Caco-2 (cell line): ENCODE measurements at regions of chr6 and their contacts with region 1.

Region 1: GRCh38 chr6:114108119-114109002 is 137.4 kb upstream of the HDAC2 start:
- DNase-seq: peak; percentile 85 to 87
- H3K4me3 ChIP-seq: no peak overlapping the region
- H3K4me3 Mint-ChIP-seq: no peak overlapping the region
- H3K27ac Mint-ChIP-seq: no peak overlapping the region
- H3K4me1 ChIP-seq: peaks cover 5% of the 10 kb centered on the region; the same call in 1 of the 2 replicates
- H3K4me1 Mint-ChIP-seq: peaks cover 13% of the 10 kb centered on the region
- H3K27me3 ChIP-seq: no peaks in the 10 kb centered on the region
- H3K27me3 Mint-ChIP-seq: no peaks in the 10 kb centered on the region
- CTCF ChIP-seq: peak; percentile 76 to 79

Region 2: DNA sequence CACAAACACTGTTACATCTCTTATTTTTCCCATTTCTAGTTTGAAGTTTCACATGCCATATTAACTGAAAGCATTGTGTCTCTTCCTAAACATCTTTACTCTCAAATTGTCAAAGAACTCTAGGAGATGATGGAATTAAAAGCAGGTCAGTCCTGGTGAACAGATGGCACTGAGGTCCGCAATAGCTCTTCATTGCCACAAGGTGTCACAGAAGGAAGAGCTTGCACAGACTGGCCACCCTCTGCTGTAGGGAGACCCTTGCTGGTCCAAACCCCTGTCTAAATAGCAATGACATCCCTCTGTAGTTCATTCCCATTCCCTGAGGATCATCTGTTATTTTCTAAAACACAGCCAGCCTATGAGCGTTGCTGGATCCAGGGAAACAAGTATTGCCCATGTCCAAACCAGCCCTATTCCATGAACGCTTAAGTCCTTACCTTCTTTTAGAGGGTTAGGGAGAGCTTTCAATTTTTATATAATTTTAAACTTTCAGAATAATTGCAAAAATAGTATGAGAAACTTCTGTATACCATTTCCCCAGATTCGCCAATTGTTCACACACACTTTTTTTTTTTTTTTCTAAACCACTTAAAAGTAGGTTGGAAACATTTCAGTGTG is 127.3 kb before region 1 on chr6:
- CTCF ChIA-PET with region 1: interaction called, 29 read pairs
- POLR2A ChIA-PET with region 1: interaction called, 3 read pairs
- intact Hi-C with region 1: loop called (anchors 1 kb)
- DNase-seq: peak; percentile 50 to 66
- H3K4me3 ChIP-seq: no peak overlapping the region
- H3K4me3 Mint-ChIP-seq: no peak overlapping the region
- H3K27ac Mint-ChIP-seq: no peak overlapping the region
- H3K4me1 ChIP-seq: no peaks in the 10 kb centered on the region
- H3K4me1 Mint-ChIP-seq: no peaks in the 10 kb centered on the region
- H3K27me3 ChIP-seq: no peaks in the 10 kb centered on the region
- H3K27me3 Mint-ChIP-seq: no peaks in the 10 kb centered on the region
- CTCF ChIP-seq: peak; percentile 76 to 78

Region 3: GRCh38 chr6:114135363-114135992 is 27.1 kb after region 1 on chr6:
- CTCF ChIA-PET with region 1: no interaction called
- POLR2A ChIA-PET with region 1: no interaction called
- intact Hi-C with region 1: no loop called
- DNase-seq: no peak
- H3K4me3 ChIP-seq: no peak overlapping the region
- H3K4me3 Mint-ChIP-seq: no peak overlapping the region
- H3K27ac Mint-ChIP-seq: no peak overlapping the region
- H3K4me1 ChIP-seq: no peaks in the 10 kb centered on the region
- H3K4me1 Mint-ChIP-seq: peaks cover 6% of the 10 kb centered on the region
- H3K27me3 ChIP-seq: no peaks in the 10 kb centered on the region
- H3K27me3 Mint-ChIP-seq: no peaks in the 10 kb centered on the region
- CTCF ChIP-seq: no peak

Region 4: DNA sequence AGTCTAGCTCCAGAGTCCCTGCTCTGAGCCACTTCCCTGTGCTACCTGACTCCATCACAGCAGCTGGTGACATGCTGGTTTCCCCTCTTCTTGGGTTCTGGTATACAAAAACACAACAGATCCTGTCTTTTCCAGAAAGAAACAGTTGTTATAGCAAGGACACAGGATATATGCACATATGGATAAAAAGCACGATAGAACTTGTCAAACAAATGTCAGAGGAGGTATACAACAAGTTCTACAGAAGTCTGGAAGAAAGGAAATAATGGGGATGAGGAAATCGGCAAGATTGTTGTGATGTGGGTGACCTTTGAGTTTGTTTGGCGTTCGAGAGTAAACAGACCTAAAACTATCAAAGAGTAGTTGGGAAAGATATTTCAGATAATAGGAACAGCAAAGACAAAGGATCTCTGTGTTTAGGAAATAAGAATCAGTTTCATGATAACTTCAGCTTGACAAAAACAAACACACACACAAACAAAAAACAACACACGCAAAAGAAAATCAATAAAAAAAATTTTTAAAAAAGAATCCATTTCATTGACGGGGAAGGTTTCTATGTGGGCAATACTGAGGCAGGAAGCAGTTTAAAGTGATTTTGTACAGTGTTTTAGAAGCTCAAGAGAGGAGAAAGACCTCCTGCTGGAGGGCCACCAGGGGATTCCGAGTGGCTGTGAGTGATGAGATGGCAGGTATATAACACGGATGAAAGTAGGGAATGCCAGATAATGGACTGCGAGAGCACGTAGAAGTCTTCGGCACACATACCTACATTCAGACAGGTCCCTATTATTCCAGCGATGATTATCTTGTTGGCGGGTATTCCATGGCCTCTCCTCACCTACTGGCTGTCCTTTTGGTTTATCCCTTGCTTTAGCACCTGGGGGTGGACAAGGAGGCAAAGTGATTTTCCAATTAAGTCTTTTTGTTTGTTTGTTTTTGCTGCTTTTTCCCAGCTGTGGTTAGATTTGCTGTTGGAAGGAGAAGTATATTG is 59.5 kb after region 1 on chr6:
- CTCF ChIA-PET with region 1: no interaction called
- POLR2A ChIA-PET with region 1: no interaction called
- intact Hi-C with region 1: loop called (anchors 2 kb)
- DNase-seq: peak; percentile 36 to 38
- H3K4me3 ChIP-seq: no peak overlapping the region
- H3K4me3 Mint-ChIP-seq: peak overlapping the region; percentile 52
- H3K27ac Mint-ChIP-seq: peak overlapping the region; percentile 12
- H3K4me1 ChIP-seq: peaks cover 48% of the 10 kb centered on the region
- H3K4me1 Mint-ChIP-seq: peaks cover 26% of the 10 kb centered on the region
- H3K27me3 ChIP-seq: no peaks in the 10 kb centered on the region
- H3K27me3 Mint-ChIP-seq: no peaks in the 10 kb centered on the region
- CTCF ChIP-seq: no peak

Region 5: DNA sequence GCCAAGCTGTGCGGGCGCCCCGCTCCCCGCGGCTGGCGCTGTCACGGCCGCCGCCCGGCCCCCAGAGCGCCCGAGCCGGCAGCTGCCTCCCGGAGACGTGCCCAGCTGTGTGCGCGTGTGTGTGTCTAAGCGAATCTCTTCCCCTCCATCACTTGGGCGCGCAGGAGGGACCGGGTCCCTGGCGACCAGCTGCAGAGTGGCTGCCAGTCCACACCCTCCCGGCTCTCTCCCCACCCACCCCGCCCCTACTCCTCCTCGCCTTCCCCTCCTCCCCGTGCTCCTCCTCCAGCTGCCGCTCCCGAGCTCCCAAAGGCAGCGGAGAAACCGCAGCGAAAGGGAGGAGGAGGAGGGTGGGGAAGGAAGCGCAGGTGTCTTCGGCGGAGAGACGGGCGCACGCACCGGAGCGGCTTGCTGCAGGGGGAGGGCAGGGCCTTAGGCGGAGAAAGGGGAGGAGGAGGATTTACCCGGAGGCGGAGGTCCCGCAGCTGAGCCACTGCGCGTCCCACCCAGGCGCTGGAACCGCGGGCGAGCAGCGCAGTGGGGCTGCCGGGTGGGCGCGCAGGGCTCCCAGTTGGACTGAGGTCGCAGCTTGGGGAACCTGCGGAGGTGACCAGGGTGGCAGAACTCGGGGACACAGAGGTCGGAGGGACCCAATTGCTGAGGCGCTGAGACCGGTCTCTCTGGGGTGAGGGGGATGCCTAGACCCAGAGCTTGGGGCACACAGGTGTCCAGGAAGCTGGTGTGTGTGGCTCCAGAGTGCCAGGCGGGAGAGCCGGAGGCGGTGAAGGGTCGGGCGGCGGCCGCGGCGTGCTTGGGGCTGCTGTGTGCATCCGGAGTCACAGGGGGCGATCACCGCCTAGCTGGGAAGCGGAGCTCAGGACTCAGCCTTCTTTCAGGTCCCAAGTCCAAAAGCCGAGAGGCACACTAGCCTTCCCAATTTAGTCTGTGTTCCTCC is 234.7 kb after region 1 on chr6 and contains the start of gene HS3ST5:
- CTCF ChIA-PET with region 1: no interaction called
- POLR2A ChIA-PET with region 1: no interaction called
- intact Hi-C with region 1: loop called (anchors 5 kb)
- DNase-seq: peak; percentile 64 to 79
- H3K4me3 ChIP-seq: peak within 1 kb of the TSS; percentile 54
- H3K4me3 Mint-ChIP-seq: peak within 1 kb of the TSS; percentile 76
- H3K27ac Mint-ChIP-seq: no peak within 1 kb of the TSS
- H3K4me1 ChIP-seq: 0 out of 2 replicates have a peak, but pooled peaks cover 4% of the 10 kb centered on the region
- H3K4me1 Mint-ChIP-seq: no peaks in the 10 kb centered on the region
- H3K27me3 ChIP-seq: no peaks in the 10 kb centered on the region
- H3K27me3 Mint-ChIP-seq: peaks cover 9% of the 10 kb centered on the region
- CTCF ChIP-seq: peak; percentile 58 to 66
- total RNA-seq, gene HS3ST5: 0.28 and 0.29 TPM in 2 replicates

Region 6: DNA sequence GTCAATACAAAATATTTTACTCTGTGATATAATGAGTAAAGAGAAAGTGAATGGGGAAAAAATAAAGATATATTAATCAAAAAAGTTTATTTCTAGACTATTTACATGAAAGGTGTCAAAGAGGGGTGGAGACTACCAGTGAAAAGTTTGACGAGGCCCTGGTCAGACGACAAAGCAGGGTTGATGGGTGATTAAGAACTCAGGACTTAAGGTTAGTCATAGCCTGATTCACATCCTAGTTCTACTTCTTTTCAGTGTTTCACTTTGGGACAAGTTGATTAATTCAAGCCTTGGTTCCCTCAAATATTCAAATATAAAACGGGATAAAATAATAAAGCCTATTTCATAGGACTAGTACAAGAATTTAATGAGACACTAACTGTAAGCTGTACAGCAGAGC is 412.6 kb after region 1 on chr6:
- CTCF ChIA-PET with region 1: no interaction called
- POLR2A ChIA-PET with region 1: no interaction called
- intact Hi-C with region 1: loop called (anchors 10 kb)
- DNase-seq: no peak
- H3K4me3 ChIP-seq: no peak overlapping the region
- H3K4me3 Mint-ChIP-seq: no peak overlapping the region
- H3K27ac Mint-ChIP-seq: no peak overlapping the region
- H3K4me1 ChIP-seq: no peaks in the 10 kb centered on the region
- H3K4me1 Mint-ChIP-seq: no peaks in the 10 kb centered on the region
- H3K27me3 ChIP-seq: no peaks in the 10 kb centered on the region
- H3K27me3 Mint-ChIP-seq: peaks cover 3% of the 10 kb centered on the region
- CTCF ChIP-seq: no peak